GM13976 (cell line): ENCODE measurements at regions of chr17 and their contacts with region 1.

Region 1: GRCh38 chr17:33072421-33073196 is 81.0 kb downstream of the SPACA3 start:
- DNase-seq: no peak
- CTCF ChIP-seq: no peak

Region 2: GRCh38 chr17:33131620-33132019 is 59.0 kb after region 1 on chr17:
- in situ Hi-C with region 1: loop called (anchors 10 kb)
- DNase-seq: no peak
- CTCF ChIP-seq: no peak

Region 3: GRCh38 chr17:33390479-33391176 is 318.0 kb after region 1 on chr17:
- in situ Hi-C with region 1: no loop called
- DNase-seq: no peak
- CTCF ChIP-seq: no peak